HCT116 (cell line): ENCODE measurements at regions of chr1 and their contacts with region 1.

Region 1: DNA sequence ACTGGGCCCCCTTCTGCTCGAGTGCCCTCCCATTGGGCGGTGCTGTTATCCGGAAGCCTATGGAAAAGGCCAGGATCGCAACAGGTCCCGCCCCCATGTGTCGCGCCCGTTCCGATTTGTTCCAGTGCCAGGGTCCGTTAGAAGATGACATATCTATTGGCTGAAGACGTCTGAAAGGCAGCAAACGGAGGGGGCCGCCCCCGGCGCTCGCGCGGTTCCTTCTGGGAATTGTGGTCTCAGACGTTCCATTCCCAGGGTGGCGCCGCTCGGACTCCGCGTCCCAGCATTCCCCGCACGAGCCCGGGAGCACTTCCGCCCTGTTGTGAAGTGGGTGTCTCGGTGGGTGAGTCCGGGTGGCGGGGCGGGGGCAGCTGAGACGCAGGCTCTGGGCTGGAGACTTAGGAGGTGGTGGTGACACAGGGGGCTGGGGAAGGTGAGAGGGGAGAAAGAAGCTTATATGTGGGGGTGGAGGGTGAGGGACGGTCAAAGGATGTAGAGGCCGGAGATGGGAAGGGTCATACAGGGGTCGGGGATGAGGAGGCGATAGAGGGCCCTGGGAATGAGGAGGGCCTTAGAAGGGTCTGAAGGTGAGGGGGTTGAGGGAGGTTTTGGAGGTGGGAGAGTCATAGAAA is at the start of gene ZSCAN20:
- DNase-seq: peak; percentile 95
- ATAC-seq: peak; percentile 89
- H3K4me3 ChIP-seq: peak within 1 kb of the TSS; percentile 83 to 93
- H3K27ac ChIP-seq: peak within 1 kb of the TSS; percentile 40
- H3K4me1 ChIP-seq: peaks cover 6 to 42% of the 10 kb centered on the region in 2 experiments; a peak in 3 of 4 replicates
- H3K27me3 ChIP-seq: no peaks in the 10 kb centered on the region
- CTCF ChIP-seq: no peak
- POLR2A ChIP-seq: no peak
- RAD21 ChIP-seq: no peak
- total RNA-seq, gene ZSCAN20: 9.0 TPM

Region 2: DNA sequence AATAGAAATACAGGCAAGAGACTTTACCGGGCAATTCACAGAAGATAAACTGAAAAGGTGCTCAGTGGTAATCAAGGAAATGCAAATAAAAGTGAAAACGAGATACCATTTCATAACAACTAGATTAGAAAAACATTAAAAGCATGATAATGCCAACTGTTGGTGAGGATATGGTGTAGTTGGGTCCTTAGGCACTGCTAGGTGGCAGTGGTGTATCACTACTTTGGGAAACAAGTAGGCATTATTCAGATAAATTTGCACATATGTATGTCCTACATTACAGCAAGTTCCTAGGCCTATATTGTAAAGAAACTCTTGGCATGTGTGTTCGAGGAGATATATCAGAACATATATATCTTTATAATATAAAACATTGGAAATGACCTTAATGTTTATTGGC is 360.5 kb before region 1 on chr1:
- CTCF ChIA-PET with region 1: interaction called, 3 read pairs
- POLR2A ChIA-PET with region 1: no interaction called
- RAD21 ChIA-PET with region 1: no interaction called
- intact Hi-C with region 1: loop called (anchors 5 kb)
- DNase-seq: no peak
- ATAC-seq: peak; percentile 69
- H3K4me3 ChIP-seq: no peak overlapping the region
- H3K27ac ChIP-seq: no peak overlapping the region
- H3K4me1 ChIP-seq: no peaks in the 10 kb centered on the region
- H3K27me3 ChIP-seq: no peaks in the 10 kb centered on the region
- CTCF ChIP-seq: peak; percentile 28 to 47 (median 35); a peak in 4 of 6 replicates
- POLR2A ChIP-seq: no peak
- RAD21 ChIP-seq: peak; percentile 68

Region 3: GRCh38 chr1:33219881-33220661 is 252.4 kb before region 1 on chr1:
- CTCF ChIA-PET with region 1: interaction called, 9 read pairs
- POLR2A ChIA-PET with region 1: no interaction called
- RAD21 ChIA-PET with region 1: no interaction called
- intact Hi-C with region 1: loop called (anchors 5 kb)
- DNase-seq: peak; percentile 60
- ATAC-seq: peak; percentile 69
- H3K4me3 ChIP-seq: peak overlapping the region in 1 of 2 experiments; percentile 42; a peak in 2 of 4 replicates
- H3K27ac ChIP-seq: peak overlapping the region; percentile 82
- H3K4me1 ChIP-seq: peaks cover 30 to 41% of the 10 kb centered on the region in 2 experiments
- H3K27me3 ChIP-seq: no peaks in the 10 kb centered on the region
- CTCF ChIP-seq: no peak
- POLR2A ChIP-seq: no peak
- RAD21 ChIP-seq: peak; percentile 33; the same call in 1 of the 2 replicates

Region 4: DNA sequence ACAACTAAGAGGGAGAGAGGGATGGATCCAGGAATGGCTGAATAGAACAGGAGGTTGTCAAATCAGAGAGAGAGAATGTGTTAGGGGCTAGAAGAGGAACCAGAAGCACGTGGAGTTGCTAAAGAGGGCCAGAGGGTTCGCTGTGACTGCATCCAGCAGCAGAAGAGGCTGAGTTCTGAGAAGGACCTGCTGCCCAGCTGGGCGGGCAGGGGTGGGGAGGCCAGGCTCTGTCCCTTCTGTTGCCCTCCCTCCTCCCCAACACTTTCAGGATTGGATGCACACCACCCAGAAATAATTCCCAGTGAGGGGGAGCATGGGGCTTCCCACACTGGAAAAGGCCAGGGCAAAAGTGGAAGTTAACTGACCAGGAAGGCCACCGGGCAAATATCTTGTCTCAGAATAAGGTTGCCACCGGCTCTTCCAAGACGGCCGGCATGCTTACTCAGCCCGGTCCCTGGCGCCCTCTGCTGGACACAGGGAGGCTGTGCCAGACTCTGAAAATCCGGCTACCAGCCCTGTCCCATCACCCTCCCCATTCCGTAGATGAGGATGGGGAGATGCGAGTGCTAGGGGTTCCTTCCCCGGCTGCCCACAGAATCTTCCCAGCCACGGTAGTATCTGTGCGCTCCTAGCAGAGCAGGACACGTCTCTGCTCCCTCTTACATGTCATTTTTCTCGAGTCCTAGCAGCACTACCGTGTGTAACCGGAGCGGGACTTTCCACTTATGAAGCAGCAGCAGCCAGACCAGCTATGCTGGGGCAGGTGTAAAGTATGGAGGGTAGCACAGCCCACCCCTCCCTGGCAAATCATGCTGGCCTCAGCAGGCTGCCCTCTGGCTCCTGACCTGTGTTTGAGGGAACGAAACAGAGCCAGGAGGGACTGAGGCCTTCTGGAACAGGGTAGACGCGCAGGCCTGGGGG is 104.7 kb before region 1 on chr1:
- CTCF ChIA-PET with region 1: interaction called, 3 read pairs
- POLR2A ChIA-PET with region 1: no interaction called
- RAD21 ChIA-PET with region 1: no interaction called
- intact Hi-C with region 1: loop called (anchors 5 kb)
- DNase-seq: peak; percentile 38
- ATAC-seq: peak; percentile 91
- H3K4me3 ChIP-seq: no peak overlapping the region
- H3K27ac ChIP-seq: no peak overlapping the region; the same call in 1 of the 2 replicates
- H3K4me1 ChIP-seq: 0 out of 4 replicates have a peak, but pooled peaks cover 0 to 3% of the 10 kb centered on the region in 2 experiments
- H3K27me3 ChIP-seq: no peaks in the 10 kb centered on the region
- CTCF ChIP-seq: peak; percentile 87 to 93 (median 93)
- POLR2A ChIP-seq: no peak
- RAD21 ChIP-seq: peak; percentile 92

Region 5: DNA sequence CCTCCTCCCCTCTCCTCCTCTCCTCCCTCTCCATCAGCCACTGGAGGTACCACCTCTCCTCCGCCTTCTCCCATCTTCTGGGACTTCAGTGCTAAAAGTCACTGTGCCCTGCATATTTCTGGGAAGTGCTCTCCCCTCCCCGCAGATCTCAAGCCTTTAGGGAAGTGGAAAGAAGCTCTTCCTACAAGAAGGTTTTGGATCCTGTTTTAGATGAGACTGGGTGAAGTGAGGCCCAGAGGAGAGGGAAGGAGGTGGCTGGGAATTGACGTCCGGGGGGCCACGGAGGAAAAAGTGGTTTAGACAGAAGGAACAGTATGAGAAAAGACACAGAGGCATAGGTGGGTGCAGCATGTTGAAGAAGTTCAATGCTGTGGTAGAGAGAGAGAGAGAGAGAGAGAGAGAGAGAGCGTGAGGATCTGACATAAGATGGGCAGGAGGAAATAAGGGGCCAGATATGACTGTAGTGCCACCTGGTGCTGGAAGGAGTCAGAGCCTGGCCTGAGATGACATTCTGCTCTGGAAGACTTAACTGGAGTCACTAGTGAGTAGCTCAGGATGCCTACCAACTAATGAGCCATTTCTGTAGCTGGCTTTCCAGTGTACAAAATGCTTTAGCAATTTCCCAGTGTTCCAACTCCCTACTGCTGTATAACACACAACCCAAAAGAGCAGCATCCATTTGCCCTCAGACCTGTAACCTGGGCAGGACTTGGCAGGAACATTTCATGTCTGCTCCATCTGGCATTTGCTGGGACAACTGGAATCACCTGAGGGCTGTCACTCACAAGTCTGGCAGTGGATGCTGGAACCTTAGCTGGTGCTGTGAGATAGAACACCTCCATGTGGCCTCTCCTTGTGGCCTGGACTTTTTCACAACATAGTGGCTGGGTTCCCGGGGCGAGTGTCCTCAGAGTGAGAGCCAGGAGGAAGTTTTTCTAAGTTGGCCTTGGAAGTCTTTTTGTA is 16.6 kb before region 1 on chr1:
- CTCF ChIA-PET with region 1: interaction called, 10 read pairs
- POLR2A ChIA-PET with region 1: interaction called, 6 read pairs
- RAD21 ChIA-PET with region 1: interaction called in 1 of 2 experiments, 3 read pairs
- intact Hi-C with region 1: no loop called
- DNase-seq: peak; percentile 80
- ATAC-seq: peak; percentile 92
- H3K4me3 ChIP-seq: no peak overlapping the region
- H3K27ac ChIP-seq: no peak overlapping the region; the same call in 1 of the 2 replicates
- H3K4me1 ChIP-seq: peaks cover 40 to 59% of the 10 kb centered on the region in 2 experiments
- H3K27me3 ChIP-seq: no peaks in the 10 kb centered on the region
- CTCF ChIP-seq: peak; percentile 84 to 92 (median 84)
- POLR2A ChIP-seq: no peak
- RAD21 ChIP-seq: peak; percentile 98